Dendritic cell treated with granulocyte-macrophage colony-stimulating factor and Interleukin-4, amounts not matched to agents 40 ng/mL and 50 ng/mL, for 4 days (primary cell): ENCODE measurements at regions of chr5 and their contacts with region 1.

Region 1: GRCh38 chr5:17118631-17119030 is 98.8 kb upstream of the BASP1 start:
- H3K4me3 Mint-ChIP-seq: peak overlapping the region; percentile 32
- H3K27ac Mint-ChIP-seq: peak overlapping the region; percentile 92
- H3K4me1 Mint-ChIP-seq: peaks cover 46% of the 10 kb centered on the region
- H3K27me3 Mint-ChIP-seq: peaks cover 6% of the 10 kb centered on the region

Region 2: GRCh38 chr5:17105744-17106418 is 12.8 kb before region 1 on chr5:
- intact Hi-C with region 1: loop called (anchors 1 kb)
- H3K4me3 Mint-ChIP-seq: no peak overlapping the region
- H3K27ac Mint-ChIP-seq: no peak overlapping the region
- H3K4me1 Mint-ChIP-seq: peaks cover 31% of the 10 kb centered on the region
- H3K27me3 Mint-ChIP-seq: peaks cover 18% of the 10 kb centered on the region

Region 3: GRCh38 chr5:17204133-17204489 is 85.5 kb after region 1 on chr5:
- intact Hi-C with region 1: no loop called
- H3K4me3 Mint-ChIP-seq: no peak overlapping the region
- H3K27ac Mint-ChIP-seq: no peak overlapping the region
- H3K4me1 Mint-ChIP-seq: no peaks in the 10 kb centered on the region
- H3K27me3 Mint-ChIP-seq: peaks cover 10% of the 10 kb centered on the region

Region 4: DNA sequence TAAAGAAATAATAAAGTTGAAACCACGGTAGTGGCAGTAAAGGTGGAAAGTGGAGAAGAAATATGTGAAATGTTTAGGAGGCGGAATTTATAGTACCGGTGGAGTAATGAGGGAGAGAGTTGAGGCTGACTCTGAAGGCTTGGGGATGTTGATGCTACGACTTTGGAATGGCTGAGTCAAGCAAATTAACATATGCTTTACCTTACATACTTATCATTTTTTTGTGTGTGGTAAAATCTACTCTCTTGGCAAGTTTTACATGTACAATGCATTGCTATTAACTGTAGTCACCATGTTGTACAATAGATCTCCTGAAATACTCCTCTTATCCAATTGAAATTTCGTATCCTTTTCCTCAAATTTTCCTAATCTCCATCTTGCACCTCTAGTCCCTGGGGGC is 694.6 kb after region 1 on chr5:
- intact Hi-C with region 1: no loop called
- H3K4me3 Mint-ChIP-seq: no peak overlapping the region
- H3K27ac Mint-ChIP-seq: no peak overlapping the region
- H3K4me1 Mint-ChIP-seq: no peaks in the 10 kb centered on the region
- H3K27me3 Mint-ChIP-seq: no peaks in the 10 kb centered on the region